AG04450 (cell line): ENCODE measurements at regions of chr15 and their contacts with region 1.

Region 1: DNA sequence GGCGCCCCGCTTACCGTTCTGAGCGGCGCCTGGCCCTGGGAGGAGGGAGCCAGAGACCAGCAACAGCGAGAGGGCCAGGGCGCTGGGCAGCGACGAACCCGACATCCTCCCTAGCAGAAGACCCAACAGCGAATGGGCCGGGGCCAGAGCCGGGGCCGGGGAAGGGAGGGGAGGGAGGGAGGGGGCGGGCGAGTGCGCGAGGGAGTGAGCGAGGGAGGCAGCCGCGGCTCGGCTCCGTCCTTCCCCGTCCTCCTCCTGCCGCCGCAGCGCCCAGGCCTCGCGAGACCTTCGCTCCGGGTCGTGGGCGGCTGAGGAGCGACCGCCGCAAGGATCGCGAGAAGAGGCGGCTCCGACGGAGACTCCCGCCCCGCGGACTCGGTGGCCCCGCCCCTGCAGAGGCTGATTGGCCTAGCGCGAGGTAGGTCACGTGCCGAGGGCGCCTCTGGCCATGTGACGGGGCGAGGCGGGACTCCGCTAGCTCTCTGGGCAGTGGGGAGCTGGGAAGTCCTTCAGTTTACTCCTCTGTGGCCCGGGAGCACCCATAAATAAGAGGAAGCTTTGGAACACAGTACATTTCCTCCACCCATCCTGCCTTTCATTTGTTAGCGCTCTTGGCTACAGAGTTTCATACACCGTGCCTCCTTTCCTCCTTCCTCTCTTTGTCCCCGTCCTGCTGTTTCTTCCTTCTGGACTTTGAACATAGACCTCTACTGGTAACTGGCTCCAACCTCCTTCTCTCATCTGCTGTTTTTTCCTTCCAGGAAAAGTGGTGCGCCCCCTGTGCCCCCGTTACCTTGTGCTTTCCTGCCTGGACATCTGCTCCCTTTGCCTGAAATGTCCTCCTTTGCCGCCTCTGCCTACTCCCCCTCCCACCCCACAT is at the start of gene NPTN:
- DNase-seq: peak; percentile 93
- H3K4me3 ChIP-seq: peak within 1 kb of the TSS; percentile 64
- H3K27ac ChIP-seq: peak within 1 kb of the TSS; percentile 91
- H3K27me3 ChIP-seq: peaks cover 2% of the 10 kb centered on the region
- CTCF ChIP-seq: peak; percentile 16; the same call in 1 of the 2 replicates
- polyA plus RNA-seq, gene NPTN: 195 and 197 TPM in 2 replicates

Region 2: GRCh38 chr15:73284090-73284716 is 349.1 kb before region 1 on chr15:
- CTCF ChIA-PET with region 1: interaction called, 12 read pairs
- POLR2A ChIA-PET with region 1: no interaction called
- DNase-seq: no peak
- H3K4me3 ChIP-seq: no peak overlapping the region
- H3K27ac ChIP-seq: no peak overlapping the region
- H3K27me3 ChIP-seq: peaks cover 3% of the 10 kb centered on the region
- CTCF ChIP-seq: peak; percentile 41

Region 3: GRCh38 chr15:73539212-73540125 is 93.9 kb before region 1 on chr15:
- CTCF ChIA-PET with region 1: interaction called, 14 read pairs
- POLR2A ChIA-PET with region 1: no interaction called
- DNase-seq: no peak
- H3K4me3 ChIP-seq: no peak overlapping the region
- H3K27ac ChIP-seq: no peak overlapping the region
- H3K27me3 ChIP-seq: no peaks in the 10 kb centered on the region
- CTCF ChIP-seq: no peak

Region 4: DNA sequence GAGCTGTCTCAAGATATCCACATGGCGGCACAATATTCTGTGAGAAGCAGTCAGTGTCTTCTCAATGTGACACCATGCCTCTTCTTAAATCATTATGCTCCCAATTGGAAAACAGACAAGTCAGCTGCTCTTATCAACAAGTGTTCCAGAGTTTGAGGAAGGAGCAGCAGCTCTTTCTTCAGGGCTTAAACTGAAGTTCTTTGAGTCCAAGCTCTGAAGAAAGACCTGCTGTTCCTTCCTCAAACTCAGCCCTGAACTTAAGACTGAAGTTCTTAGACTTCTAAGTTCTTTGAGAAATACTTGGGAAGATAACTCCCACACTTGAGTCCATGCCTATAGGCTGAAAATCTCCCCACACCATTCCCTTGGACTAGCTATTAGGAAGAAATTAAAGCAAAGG is 43.6 kb before region 1 on chr15:
- CTCF ChIA-PET with region 1: interaction called, 13 read pairs
- POLR2A ChIA-PET with region 1: no interaction called
- DNase-seq: no peak
- H3K4me3 ChIP-seq: no peak overlapping the region
- H3K27ac ChIP-seq: no peak overlapping the region
- H3K27me3 ChIP-seq: no peaks in the 10 kb centered on the region
- CTCF ChIP-seq: no peak

Region 5: DNA sequence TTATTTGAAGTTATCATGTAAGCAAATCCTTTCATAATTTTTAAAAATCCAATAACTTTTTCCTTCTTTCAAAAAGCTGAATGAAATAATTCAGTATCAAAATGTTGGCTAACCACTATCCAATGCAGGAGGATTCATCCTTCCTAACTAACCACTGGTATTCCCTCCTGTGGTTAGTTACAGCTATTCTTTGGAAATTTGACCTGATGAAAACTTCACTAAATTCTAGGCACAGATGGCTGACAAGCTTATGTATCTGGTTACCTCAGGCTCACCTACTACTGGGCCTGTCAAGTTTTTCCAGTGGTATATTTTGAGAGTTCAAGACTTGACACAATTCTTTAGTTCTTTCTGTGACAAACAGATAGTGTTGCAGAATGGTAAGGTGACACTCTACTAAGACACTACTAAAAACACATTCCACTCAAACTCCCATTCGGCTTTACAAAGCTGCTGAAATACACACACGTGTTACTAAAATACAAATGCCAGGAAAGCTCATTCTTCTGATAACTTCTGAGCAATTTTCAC is 16.0 kb before region 1 on chr15:
- CTCF ChIA-PET with region 1: interaction called, 138 read pairs
- POLR2A ChIA-PET with region 1: interaction called, 4 read pairs
- DNase-seq: no peak
- H3K4me3 ChIP-seq: no peak overlapping the region
- H3K27ac ChIP-seq: no peak overlapping the region
- H3K27me3 ChIP-seq: no peaks in the 10 kb centered on the region
- CTCF ChIP-seq: no peak

Region 6: GRCh38 chr15:73683777-73684580 is 50.6 kb after region 1 on chr15 and contains the start of gene CD276:
- CTCF ChIA-PET with region 1: interaction called, 97 read pairs
- POLR2A ChIA-PET with region 1: interaction called, 6 read pairs
- DNase-seq: no peak
- H3K4me3 ChIP-seq: peak within 1 kb of the TSS; percentile 84
- H3K27ac ChIP-seq: peak within 1 kb of the TSS; percentile 70
- H3K27me3 ChIP-seq: no peaks in the 10 kb centered on the region
- CTCF ChIP-seq: no peak
- polyA plus RNA-seq, gene CD276: 86.4 and 101 TPM in 2 replicates